Gastrocnemius medialis (tissue), 4 donors: ENCODE measurements at regions of chr13 and their contacts with region 1.

Region 1: DNA sequence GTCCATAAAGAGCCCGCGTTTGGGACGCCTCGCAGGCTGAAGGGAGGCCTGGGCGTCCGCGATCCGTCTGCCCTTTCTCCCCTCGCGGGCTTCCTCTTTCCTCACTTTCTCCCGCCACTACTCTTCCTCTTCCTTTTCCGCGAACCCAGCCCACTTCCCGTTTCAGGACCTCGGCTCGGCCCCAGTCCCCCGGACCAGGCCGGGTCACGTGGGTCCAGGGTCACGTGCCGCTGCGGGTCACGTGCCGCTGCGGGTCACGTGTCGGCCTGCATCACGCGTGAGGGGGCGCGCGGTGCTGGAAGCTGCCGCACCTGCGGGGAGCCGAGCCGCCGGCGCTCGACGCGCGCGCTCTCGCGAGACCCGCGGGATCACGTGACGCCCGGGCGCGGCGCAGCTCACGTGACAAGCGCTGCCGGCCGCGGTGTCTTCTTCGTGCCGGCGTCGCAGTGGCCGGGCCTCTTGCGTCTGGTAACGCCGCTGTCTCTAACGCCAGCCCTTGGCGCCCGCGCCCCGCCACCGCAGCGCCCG is at the start of gene LAMP1:
- DNase-seq: peak; percentile 94 to 98
- ATAC-seq: peak; percentile 75 to 87
- H3K4me3 ChIP-seq: peak within 1 kb of the TSS; percentile 82 to 92 (median 88)
- H3K27ac ChIP-seq: peak within 1 kb of the TSS; percentile 91 to 98 (median 94)
- H3K4me1 ChIP-seq: peaks cover 34 to 55% of the 10 kb centered on the region in 2 donors
- H3K27me3 ChIP-seq: no peaks in the 10 kb centered on the region
- CTCF ChIP-seq: peak in 2 of 5 experiments; percentile 70 to 79
- POLR2A ChIP-seq: peak; percentile 88 to 89
- total RNA-seq, gene LAMP1: 36.4 to 80.9 (median 66.9) TPM

Region 2: DNA sequence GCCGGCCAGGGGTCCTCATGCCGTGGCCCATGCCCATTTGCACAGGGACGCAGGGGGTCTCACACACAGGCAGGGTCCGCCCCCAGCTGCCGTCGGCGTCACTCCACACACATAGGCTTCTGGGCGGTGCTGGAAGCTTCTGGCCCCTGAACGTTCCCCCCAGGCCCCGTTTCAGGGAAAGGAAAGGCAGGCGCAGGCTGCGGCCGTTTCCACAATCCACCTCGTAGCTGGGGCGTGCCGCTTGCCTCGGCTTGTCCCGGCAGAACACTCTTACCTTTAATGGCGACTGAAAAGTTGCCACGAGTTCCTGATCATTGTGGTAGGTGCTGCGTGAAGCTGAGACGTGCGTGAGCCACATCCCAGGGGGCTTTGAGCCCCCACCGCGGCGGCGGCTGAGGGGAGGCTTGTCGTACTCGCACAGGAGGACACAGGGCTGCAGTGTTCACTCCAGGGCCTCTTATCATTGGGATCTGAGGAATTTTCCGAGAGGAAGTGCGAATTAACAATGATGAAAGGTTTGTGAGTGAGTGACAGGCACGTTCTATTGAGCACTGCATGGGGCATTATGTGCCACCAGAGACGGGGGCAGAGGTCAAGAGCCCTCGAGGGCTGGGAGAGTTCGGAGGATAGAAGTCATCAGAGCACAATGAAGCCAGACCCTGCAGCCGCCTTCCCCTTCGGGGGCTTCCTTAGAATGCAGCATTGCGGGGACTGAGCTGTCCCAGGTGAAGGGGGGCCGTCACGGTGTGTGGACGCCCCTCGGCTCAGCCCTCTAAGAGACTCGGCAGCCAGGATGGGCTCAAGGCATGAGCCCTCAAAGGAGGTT is 274.3 kb before region 1 on chr13:
- in situ Hi-C with region 1: no loop called
- intact Hi-C with region 1: no loop called
- DNase-seq: no peak
- ATAC-seq: peak; percentile 8 to 64
- H3K4me3 ChIP-seq: no peak overlapping the region
- H3K27ac ChIP-seq: peak overlapping the region in 3 of 4 donors; percentile 50 to 62 (median 56)
- H3K4me1 ChIP-seq: no peaks in the 10 kb centered on the region
- H3K27me3 ChIP-seq: peaks cover 0 to 7% (median 6%) of the 10 kb centered on the region in 3 donors
- CTCF ChIP-seq: no peak
- POLR2A ChIP-seq: no peak

Region 3: GRCh38 chr13:113208424-113209335 is 88.2 kb before region 1 on chr13 and contains the start of gene PCID2:
- in situ Hi-C with region 1: loop called in 1 of 4 experiments (anchors 10 kb)
- intact Hi-C with region 1: no loop called
- DNase-seq: peak; percentile 80 to 86
- ATAC-seq: peak; percentile 79 to 81
- H3K4me3 ChIP-seq: peak within 1 kb of the TSS; percentile 77 to 99 (median 90)
- H3K27ac ChIP-seq: peak within 1 kb of the TSS; percentile 94 to 100 (median 100)
- H3K4me1 ChIP-seq: peaks cover 74 to 75% of the 10 kb centered on the region in 2 donors
- H3K27me3 ChIP-seq: no peaks in the 10 kb centered on the region
- CTCF ChIP-seq: no peak
- POLR2A ChIP-seq: peak; percentile 77 to 83
- total RNA-seq, gene PCID2: 26.4 to 45.6 (median 28.0) TPM

Region 4: DNA sequence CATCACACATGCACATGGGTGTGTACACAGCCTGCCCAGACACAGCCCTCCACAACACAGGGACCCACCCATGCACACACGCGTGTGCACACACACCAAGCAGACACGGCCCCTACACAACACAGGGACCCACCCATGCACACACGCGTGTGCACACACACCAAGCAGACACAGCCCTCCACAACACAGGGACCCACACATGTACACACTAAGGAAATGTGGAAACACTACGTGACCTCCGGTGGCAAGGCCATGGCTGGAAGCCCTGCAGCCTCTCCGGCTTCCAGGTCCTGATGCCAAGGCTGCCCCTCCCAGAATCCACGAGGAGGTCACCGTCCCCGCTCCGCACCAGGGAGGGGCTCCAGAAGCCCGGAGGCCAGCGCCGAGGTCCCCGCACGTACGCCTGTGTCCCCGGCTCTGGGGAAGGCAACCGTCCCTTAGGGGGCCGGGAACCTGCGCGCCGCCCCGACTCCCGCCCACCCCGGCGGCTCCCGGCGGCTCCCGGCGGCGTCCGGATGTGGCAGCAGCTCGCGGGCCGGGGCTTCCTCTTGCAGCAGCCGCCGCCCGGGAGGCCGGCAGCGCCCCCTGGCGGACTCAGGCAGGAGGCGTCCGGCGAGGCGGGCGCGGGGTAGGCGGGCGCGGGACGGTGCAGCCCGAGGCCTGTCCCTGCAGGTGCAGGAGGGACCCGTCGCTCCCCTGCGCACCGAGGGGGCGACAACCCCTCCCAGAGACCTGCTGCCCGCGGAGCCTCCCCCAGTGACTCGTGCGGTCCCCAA is 96.8 kb after region 1 on chr13:
- in situ Hi-C with region 1: loop called in 3 of 4 experiments (anchors 5 to 25 kb)
- intact Hi-C with region 1: loop called (anchors 5 kb)
- DNase-seq: peak in 1 of 2 donors; percentile 75
- ATAC-seq: peak; percentile 60 to 82
- H3K4me3 ChIP-seq: peak overlapping the region; percentile 61 to 71 (median 66)
- H3K27ac ChIP-seq: peak overlapping the region; percentile 41 to 66 (median 58)
- H3K4me1 ChIP-seq: peaks cover 0 to 13% of the 10 kb centered on the region in 2 donors
- H3K27me3 ChIP-seq: no peaks in the 10 kb centered on the region
- CTCF ChIP-seq: peak; percentile 67 to 99 (median 97)
- POLR2A ChIP-seq: peak in 1 of 2 donors; percentile 22

Region 5: GRCh38 chr13:113452942-113453901 is 156.3 kb after region 1 on chr13 and contains the start of gene ADPRHL1:
- in situ Hi-C with region 1: loop called in 1 of 4 experiments (anchors 10 kb)
- intact Hi-C with region 1: loop called (anchors 2 kb)
- DNase-seq: peak; percentile 91 to 96
- ATAC-seq: peak; percentile 88 to 91
- H3K4me3 ChIP-seq: peak within 1 kb of the TSS; percentile 47 to 63 (median 60)
- H3K27ac ChIP-seq: peak within 1 kb of the TSS; percentile 92 to 97 (median 94)
- H3K4me1 ChIP-seq: peaks cover 31 to 33% of the 10 kb centered on the region in 2 donors
- H3K27me3 ChIP-seq: no peaks in the 10 kb centered on the region
- CTCF ChIP-seq: peak in 1 of 5 experiments; percentile 9
- POLR2A ChIP-seq: peak; percentile 91 to 98
- total RNA-seq, gene ADPRHL1: 224 to 354 (median 295) TPM

Region 6: GRCh38 chr13:113490496-113491417 is 193.9 kb after region 1 on chr13 and contains the start of gene DCUN1D2:
- in situ Hi-C with region 1: no loop called
- intact Hi-C with region 1: loop called (anchors 2 kb)
- DNase-seq: peak; percentile 87 to 94
- ATAC-seq: peak; percentile 76 to 81
- H3K4me3 ChIP-seq: peak within 1 kb of the TSS; percentile 80 to 91 (median 88)
- H3K27ac ChIP-seq: peak within 1 kb of the TSS; percentile 89 to 94 (median 92)
- H3K4me1 ChIP-seq: peaks cover 58 to 70% of the 10 kb centered on the region in 2 donors
- H3K27me3 ChIP-seq: no peaks in the 10 kb centered on the region
- CTCF ChIP-seq: peak in 1 of 5 experiments; percentile 28
- POLR2A ChIP-seq: peak; percentile 94
- total RNA-seq, gene DCUN1D2: 45.1 to 63.6 (median 56.0) TPM